HAP-1 (cell line): ENCODE measurements at regions of chr16 and their contacts with region 1.

Region 1: DNA sequence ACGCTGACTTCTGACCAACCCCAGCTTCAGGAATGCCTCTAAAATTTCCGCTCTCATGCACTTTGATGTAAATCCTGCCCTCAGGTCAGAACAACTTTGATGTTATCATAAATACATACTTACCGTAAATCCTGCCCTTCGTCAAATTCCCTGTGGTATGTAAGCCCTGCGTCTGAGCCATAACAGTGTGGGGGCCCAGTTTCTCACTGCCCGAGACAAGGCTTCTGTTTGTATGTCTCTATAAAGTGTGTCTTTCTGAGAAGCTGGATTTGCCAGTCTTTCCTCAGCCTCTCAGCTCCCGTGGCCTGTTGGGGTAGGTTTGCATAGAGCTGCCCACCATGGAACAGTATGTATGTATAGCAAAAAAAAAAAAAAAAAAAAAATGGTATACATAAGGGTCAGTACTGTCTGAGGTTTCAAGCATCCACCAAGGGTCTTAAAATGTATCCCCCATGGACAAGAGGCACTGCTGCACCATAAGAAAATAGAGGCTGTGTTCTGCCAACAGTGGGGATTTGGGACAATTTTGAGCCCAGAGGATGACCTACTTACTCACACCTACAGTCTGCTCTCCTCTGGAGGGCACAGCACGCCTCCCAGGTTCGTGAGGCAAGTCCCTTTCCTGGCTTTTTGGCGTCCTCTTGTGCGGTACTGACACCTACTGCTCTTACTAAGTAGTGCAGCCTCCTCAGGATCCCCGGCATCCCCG is 17.5 kb downstream of the PRMT7 start:
- DNase-seq: peak; percentile 79 to 85
- H3K4me3 ChIP-seq: no peak overlapping the region
- H3K4me1 ChIP-seq: peaks cover 2% of the 10 kb centered on the region
- H3K27me3 ChIP-seq: no peaks in the 10 kb centered on the region

Region 2: GRCh38 chr16:68264128-68265077 is 63.9 kb before region 1 on chr16 and contains the start of gene SLC7A6:
- in situ Hi-C with region 1: loop called (anchors 5 kb)
- DNase-seq: peak; percentile 33 to 84
- H3K4me3 ChIP-seq: peak within 1 kb of the TSS; percentile 86
- H3K4me1 ChIP-seq: peaks cover 18% of the 10 kb centered on the region
- H3K27me3 ChIP-seq: no peaks in the 10 kb centered on the region